Aorta (tissue), 5 donors: ENCODE measurements at regions of chr1 and their contacts with region 1.

Region 1: GRCh38 chr1:52697795-52698674 is at the start of gene COA7:
- DNase-seq: peak; percentile 92 to 96
- ATAC-seq: peak; percentile 96
- H3K4me3 ChIP-seq: peak within 1 kb of the TSS; percentile 12 to 58
- H3K27ac ChIP-seq: peak within 1 kb of the TSS in 1 of 2 donors; percentile 61
- H3K4me1 ChIP-seq: no peaks in the 10 kb centered on the region
- H3K27me3 ChIP-seq: no peaks in the 10 kb centered on the region
- total RNA-seq, gene COA7: 8.8 to 10.5 TPM

Region 2: GRCh38 chr1:52102336-52103013 is 595.6 kb before region 1 on chr1:
- intact Hi-C with region 1: no loop called
- DNase-seq: no peak
- ATAC-seq: no peak
- H3K4me3 ChIP-seq: no peak overlapping the region
- H3K27ac ChIP-seq: no peak overlapping the region
- H3K4me1 ChIP-seq: no peaks in the 10 kb centered on the region
- H3K27me3 ChIP-seq: no peaks in the 10 kb centered on the region

Region 3: DNA sequence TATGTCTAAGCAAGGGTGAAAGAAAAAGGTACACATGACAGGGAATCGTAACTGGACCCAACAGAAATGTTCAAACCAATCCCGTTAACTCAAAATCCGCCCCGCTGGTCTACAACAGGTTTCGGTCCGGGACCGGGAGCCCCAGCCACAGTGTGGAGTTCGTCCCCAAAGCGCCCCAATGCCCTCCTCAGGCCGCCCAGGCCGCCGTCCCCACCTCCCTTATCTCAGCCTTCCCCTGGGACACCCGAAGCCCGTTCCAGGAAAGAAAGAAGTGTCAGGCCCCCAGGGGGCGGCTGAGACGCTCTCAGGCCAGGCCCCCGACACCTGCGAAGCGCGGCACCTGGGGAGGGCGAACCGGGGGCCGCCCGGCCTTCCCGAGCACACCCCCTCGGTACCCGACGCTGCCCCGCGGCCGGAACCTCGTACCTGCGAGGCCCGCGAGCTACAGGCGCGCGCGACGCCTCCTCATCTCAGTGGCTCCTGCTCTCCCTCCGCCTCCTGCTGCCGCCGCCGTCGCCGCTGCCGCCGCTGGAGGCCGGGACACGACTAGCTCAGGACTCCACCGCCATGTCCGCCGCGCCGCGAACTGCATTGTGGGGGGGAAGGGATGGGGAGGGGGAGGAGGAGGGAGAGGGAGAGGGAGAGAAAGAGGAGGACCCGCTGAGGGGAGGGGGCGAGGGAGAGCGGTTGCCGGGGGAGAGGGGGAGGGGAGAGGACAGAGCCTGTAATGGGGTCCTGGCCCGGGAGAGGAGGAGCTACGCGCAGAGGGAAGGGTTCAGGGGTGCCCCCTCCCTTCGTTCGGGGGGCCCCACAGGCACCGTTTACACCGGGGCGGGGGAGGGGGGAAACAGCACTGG is 145.3 kb before region 1 on chr1 and contains the start of gene TUT4:
- intact Hi-C with region 1: loop called in 1 of 2 experiments (anchors 10 kb)
- DNase-seq: peak; percentile 82 to 92
- ATAC-seq: peak; percentile 89
- H3K4me3 ChIP-seq: peak within 1 kb of the TSS; percentile 74 to 95
- H3K27ac ChIP-seq: peak within 1 kb of the TSS in 1 of 2 donors; percentile 39
- H3K4me1 ChIP-seq: peaks cover 0 to 1% of the 10 kb centered on the region in 2 donors
- H3K27me3 ChIP-seq: no peaks in the 10 kb centered on the region
- total RNA-seq, gene TUT4: 49.2 to 71.5 TPM

Region 4: DNA sequence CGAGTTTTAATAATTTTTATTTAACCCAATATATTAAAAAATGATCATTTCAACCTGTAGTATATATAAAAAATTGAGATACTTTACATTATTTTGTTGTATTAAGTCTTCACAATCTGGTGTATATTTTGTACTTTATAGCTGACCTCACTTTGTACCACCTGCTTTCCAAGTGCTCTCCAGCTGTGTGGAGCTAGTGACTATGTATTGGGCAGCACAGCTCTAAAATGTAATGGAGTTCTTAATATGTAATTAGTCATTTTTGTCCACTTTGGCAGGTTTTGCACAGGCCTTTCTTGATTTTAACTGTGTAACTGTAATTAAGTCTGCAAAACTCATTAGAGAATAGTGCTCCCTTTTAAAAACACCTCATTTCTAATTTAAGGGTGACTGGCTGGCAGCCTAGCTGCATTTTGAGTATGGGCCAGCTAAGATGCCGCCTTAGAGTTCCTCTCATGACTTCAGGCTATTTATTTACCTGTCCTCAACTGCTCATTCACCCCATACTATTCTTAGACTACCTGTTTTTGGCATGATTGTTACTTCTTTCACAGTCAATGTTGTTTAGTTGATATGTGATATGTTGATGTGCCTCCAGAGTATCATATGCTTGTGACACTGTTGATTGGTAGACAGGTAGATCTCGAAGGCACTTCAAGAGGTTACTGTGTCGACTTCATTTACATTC is 71.5 kb after region 1 on chr1:
- intact Hi-C with region 1: no loop called
- DNase-seq: no peak
- ATAC-seq: no peak
- H3K4me3 ChIP-seq: no peak overlapping the region
- H3K27ac ChIP-seq: no peak overlapping the region
- H3K4me1 ChIP-seq: peaks cover 2% of the 10 kb centered on the region in 2 donors
- H3K27me3 ChIP-seq: no peaks in the 10 kb centered on the region